SK-N-SH (cell line): ENCODE measurements at regions of chr1 and their contacts with region 1.

Region 1: GRCh38 chr1:9494929-9495758 is 44.1 kb upstream of the SLC25A33 start:
- DNase-seq: peak; percentile 90
- H3K4me3 ChIP-seq: peak overlapping the region; percentile 16 to 39; a peak in 2 of 4 replicates
- H3K27ac ChIP-seq: no peak overlapping the region
- H3K4me1 ChIP-seq: peaks cover 0 to 5% of the 10 kb centered on the region in 2 experiments; a peak in 1 of 4 replicates
- H3K27me3 ChIP-seq: no peaks in the 10 kb centered on the region
- CTCF ChIP-seq: peak; percentile 79
- EP300 ChIP-seq: no peak
- RAD21 ChIP-seq: peak; percentile 69

Region 2: DNA sequence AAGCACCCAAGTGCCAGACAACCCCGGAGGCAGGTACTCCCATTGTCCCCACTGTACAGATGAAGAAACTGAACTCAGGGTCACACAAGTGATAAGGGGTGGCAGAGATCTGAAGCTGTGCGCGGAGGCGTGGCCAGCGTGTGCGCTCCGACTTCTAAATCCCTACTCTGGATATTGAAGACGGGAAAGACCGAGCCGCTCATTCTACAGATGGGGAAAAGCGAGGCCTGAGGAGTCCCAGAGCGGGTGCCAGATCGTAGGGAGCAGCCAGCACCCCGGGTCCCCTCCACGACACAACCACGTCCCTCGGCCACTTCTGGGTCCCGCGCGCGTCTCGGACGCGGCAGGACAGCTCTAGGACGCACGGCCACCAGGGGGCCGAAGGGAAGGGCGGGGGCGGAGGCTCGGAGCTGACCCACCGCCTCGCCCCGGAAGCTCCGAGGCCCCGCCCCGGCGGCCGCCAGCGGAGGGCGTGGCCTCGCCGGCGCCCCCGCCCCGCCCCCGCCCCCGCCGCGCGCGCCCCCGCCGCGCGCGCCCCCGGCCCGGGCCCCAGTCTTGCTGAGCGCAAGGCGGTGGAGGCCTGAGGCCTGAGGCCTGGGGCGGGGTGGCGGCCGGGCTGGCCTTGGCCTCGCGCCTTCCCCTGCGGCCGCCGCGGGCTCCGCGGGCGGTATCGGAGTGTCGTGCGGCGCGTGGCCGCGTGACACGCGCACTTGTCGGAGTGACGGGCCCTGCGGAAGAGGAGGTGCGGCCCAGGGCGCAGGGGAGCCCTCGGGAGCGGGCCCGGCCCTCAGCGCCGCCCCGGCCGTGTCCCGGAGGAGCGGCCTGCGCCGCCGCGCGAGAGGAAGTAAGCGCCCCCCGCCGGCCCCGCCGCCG is 260.7 kb before region 1 on chr1 and contains the start of gene H6PD:
- CTCF ChIA-PET with region 1: interaction called, 21 read pairs
- POLR2A ChIA-PET with region 1: no interaction called
- DNase-seq: peak; percentile 99
- H3K4me3 ChIP-seq: peak within 1 kb of the TSS; percentile 63 to 65
- H3K27ac ChIP-seq: peak within 1 kb of the TSS; percentile 82 to 84
- H3K4me1 ChIP-seq: peaks cover 0 to 10% of the 10 kb centered on the region in 2 experiments; a peak in 1 of 4 replicates
- H3K27me3 ChIP-seq: no peaks in the 10 kb centered on the region
- CTCF ChIP-seq: peak; percentile 63
- EP300 ChIP-seq: no peak
- RAD21 ChIP-seq: peak; percentile 38
- polyA plus RNA-seq, gene H6PD: 16.2 and 19.1 TPM in 2 replicates

Region 3: GRCh38 chr1:9270290-9270883 is 224.8 kb before region 1 on chr1:
- CTCF ChIA-PET with region 1: interaction called, 156 read pairs
- POLR2A ChIA-PET with region 1: no interaction called
- DNase-seq: no peak
- H3K4me3 ChIP-seq: no peak overlapping the region
- H3K27ac ChIP-seq: no peak overlapping the region
- H3K4me1 ChIP-seq: peaks cover 5 to 6% of the 10 kb centered on the region in 2 experiments; a peak in 2 of 4 replicates
- H3K27me3 ChIP-seq: no peaks in the 10 kb centered on the region
- CTCF ChIP-seq: no peak
- EP300 ChIP-seq: no peak
- RAD21 ChIP-seq: no peak

Region 4: GRCh38 chr1:9292361-9293240 is 202.5 kb before region 1 on chr1 and contains the start of gene SPSB1:
- CTCF ChIA-PET with region 1: interaction called, 55 read pairs
- POLR2A ChIA-PET with region 1: interaction called, 3 read pairs
- DNase-seq: peak; percentile 88
- H3K4me3 ChIP-seq: peak within 1 kb of the TSS; percentile 48 to 81
- H3K27ac ChIP-seq: peak within 1 kb of the TSS; percentile 9 to 49; a peak in 1 of 4 replicates
- H3K4me1 ChIP-seq: peaks cover 7 to 15% of the 10 kb centered on the region in 2 experiments; a peak in 1 of 4 replicates
- H3K27me3 ChIP-seq: no peaks in the 10 kb centered on the region
- CTCF ChIP-seq: no peak
- EP300 ChIP-seq: no peak
- RAD21 ChIP-seq: no peak
- polyA plus RNA-seq, gene SPSB1: 8.4 and 9.2 TPM in 2 replicates

Region 5: DNA sequence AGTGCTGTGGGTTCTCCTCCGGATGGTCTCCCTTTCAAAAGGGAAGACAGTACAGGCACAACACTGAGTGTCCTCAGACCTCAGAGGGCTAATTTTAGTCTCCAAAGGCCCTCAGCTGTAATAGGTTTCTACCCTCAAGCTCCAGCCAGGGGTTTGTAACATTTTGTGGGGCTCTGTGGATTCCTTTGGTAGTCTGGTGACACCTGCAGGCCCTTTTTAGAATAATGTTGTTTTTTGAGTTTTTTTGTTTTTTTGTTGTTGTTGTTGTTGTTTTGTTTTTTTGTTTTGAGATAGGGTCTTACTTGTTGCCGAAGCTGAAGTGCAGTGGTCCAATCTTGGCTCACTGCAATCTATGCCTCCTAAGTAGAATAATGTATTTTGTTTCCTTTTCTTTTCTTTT is 78.6 kb after region 1 on chr1:
- CTCF ChIA-PET with region 1: interaction called, 32 read pairs
- POLR2A ChIA-PET with region 1: no interaction called
- DNase-seq: peak; percentile 46
- H3K4me3 ChIP-seq: no peak overlapping the region
- H3K27ac ChIP-seq: no peak overlapping the region
- H3K4me1 ChIP-seq: no peaks in the 10 kb centered on the region
- H3K27me3 ChIP-seq: no peaks in the 10 kb centered on the region
- CTCF ChIP-seq: peak; percentile 56
- EP300 ChIP-seq: no peak
- RAD21 ChIP-seq: peak; percentile 63